Heart right ventricle (tissue), 16 donors: ENCODE measurements at regions of chr13 and their contacts with region 1.

Region 1: GRCh38 chr13:47680752-47681151 is 320.3 kb downstream of the SUCLA2 start:
- DNase-seq: no peak
- ATAC-seq: no peak
- H3K4me3 ChIP-seq: no peak overlapping the region
- H3K27ac ChIP-seq: no peak overlapping the region
- H3K4me1 ChIP-seq: no peaks in the 10 kb centered on the region
- H3K27me3 ChIP-seq: no peaks in the 10 kb centered on the region
- CTCF ChIP-seq: no peak

Region 2: GRCh38 chr13:47639711-47640447 is 40.9 kb before region 1 on chr13:
- intact Hi-C with region 1: loop called in 1 of 10 experiments (anchors 1 kb)
- DNase-seq: no peak
- ATAC-seq: no peak
- H3K4me3 ChIP-seq: no peak overlapping the region
- H3K27ac ChIP-seq: no peak overlapping the region
- H3K4me1 ChIP-seq: no peaks in the 10 kb centered on the region
- H3K27me3 ChIP-seq: no peaks in the 10 kb centered on the region
- CTCF ChIP-seq: no peak